CD4-positive, alpha-beta T cell (primary cell): ENCODE measurements at regions of chr4 and their contacts with region 1.

Region 1: DNA sequence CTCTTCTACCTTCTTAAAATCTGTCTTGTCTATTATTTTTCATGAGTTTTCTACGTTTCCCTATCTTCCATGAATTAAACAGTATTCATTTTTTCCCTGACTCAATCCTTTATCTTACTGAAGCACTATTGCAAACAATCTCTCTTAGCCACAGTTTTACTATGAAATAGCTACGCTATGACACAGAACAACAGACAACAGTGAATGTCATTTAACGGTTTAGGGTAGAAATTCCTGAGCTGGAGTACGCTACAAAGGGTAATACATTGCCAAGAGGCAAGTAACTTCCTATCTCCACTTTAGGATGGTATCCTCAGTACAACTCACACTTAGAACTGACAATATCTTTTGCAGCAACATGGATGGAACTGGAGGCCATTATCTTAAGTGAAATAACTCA is 552.6 kb downstream of the INPP4B start:
- DNase-seq: no peak
- ATAC-seq: no peak
- H3K4me3 ChIP-seq: no peak overlapping the region
- H3K4me3 Mint-ChIP-seq: no peak overlapping the region
- H3K27ac ChIP-seq: no peak overlapping the region
- H3K27ac Mint-ChIP-seq: peak overlapping the region; percentile 70
- H3K4me1 ChIP-seq: peaks cover 9% of the 10 kb centered on the region
- H3K4me1 Mint-ChIP-seq: peaks cover 56% of the 10 kb centered on the region
- H3K27me3 ChIP-seq: no peaks in the 10 kb centered on the region
- H3K27me3 Mint-ChIP-seq: no peaks in the 10 kb centered on the region
- CTCF ChIP-seq: no peak

Region 2: DNA sequence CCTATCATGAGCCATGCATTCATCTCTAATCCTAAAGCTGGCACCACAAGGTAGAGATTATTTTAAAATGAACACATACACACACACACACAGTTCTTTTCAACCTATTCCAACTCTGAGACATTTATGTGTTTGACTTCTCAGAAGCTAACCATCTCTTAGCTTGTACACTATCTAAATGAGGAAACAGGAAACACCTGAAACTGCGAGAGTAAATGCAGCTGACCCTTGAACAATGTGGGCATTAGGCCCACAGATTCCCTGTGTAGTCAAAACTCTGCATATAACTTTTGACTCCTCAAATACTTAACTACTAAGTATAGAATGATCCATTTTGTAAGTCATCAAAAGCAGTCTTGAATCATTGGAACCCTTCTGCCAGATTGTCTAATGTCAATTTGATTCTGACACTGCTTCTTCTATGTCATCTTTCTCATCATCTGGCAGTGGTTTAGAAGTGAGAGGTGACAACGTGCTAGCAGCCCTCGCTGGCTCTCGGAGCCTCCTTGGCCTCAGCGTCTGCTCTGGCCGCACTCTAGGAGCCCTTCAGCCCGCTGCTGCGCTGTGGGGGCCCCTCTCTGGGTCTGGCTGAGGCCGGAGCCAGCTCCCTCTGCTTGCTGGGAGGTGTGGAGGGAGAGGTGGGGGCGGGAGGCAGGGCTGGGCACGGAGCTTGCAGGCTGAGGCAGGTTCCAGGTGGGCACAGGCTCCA is 678.5 kb before region 1 on chr4:
- CTCF ChIA-PET with region 1: no interaction called
- POLR2A ChIA-PET with region 1: no interaction called
- intact Hi-C with region 1: no loop called
- DNase-seq: no peak
- ATAC-seq: no peak
- H3K4me3 ChIP-seq: no peak overlapping the region
- H3K4me3 Mint-ChIP-seq: no peak overlapping the region
- H3K27ac ChIP-seq: no peak overlapping the region
- H3K27ac Mint-ChIP-seq: no peak overlapping the region
- H3K4me1 ChIP-seq: no peaks in the 10 kb centered on the region
- H3K4me1 Mint-ChIP-seq: no peaks in the 10 kb centered on the region
- H3K27me3 ChIP-seq: no peaks in the 10 kb centered on the region
- H3K27me3 Mint-ChIP-seq: peaks cover 4% of the 10 kb centered on the region
- CTCF ChIP-seq: no peak

Region 3: DNA sequence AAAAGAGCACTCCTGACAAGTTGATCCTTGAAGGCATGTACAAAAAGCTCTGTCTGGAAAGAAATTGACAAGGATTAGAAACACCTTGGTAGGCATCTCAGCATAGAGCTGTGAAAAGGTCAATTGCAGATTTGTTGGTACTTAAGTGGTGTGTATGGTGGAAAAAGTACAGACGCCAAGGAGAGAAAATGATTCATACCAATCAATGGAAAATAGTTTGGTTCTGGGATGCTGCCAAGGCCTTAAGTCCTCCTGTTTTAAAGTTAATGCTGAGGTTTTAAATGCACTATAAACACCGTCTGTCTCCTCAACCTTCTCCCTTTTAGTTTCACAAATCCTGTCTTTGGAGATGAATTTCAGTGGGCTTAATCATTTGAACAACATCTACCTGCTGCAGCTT is 133.0 kb before region 1 on chr4:
- CTCF ChIA-PET with region 1: no interaction called
- POLR2A ChIA-PET with region 1: no interaction called
- intact Hi-C with region 1: no loop called
- DNase-seq: no peak
- ATAC-seq: no peak
- H3K4me3 ChIP-seq: no peak overlapping the region
- H3K4me3 Mint-ChIP-seq: no peak overlapping the region
- H3K27ac ChIP-seq: no peak overlapping the region
- H3K27ac Mint-ChIP-seq: no peak overlapping the region
- H3K4me1 ChIP-seq: no peaks in the 10 kb centered on the region
- H3K4me1 Mint-ChIP-seq: peaks cover 13% of the 10 kb centered on the region
- H3K27me3 ChIP-seq: no peaks in the 10 kb centered on the region
- H3K27me3 Mint-ChIP-seq: no peaks in the 10 kb centered on the region
- CTCF ChIP-seq: no peak

Region 4: DNA sequence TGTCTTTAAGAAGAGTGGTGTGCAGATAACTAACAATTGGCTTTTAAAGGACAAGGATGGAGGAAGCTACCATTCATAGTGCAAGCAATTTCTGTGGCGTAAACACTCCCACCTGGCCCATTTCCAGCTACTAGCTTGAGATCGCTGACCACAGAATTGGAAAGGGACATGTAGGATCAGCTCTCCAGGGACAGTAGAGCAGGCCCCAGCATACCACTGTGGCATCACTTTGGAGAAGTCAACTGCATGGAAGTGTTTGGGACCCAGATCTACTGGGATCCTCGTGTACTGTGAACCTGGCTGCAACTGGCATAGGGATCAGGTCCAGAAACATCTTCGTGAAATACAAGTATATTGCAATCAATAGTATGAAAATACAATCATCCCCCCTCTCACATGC is 37.6 kb after region 1 on chr4:
- CTCF ChIA-PET with region 1: interaction called, 3 read pairs
- POLR2A ChIA-PET with region 1: interaction called, 3 read pairs
- intact Hi-C with region 1: loop called in 1 of 2 experiments (anchors 5 kb)
- DNase-seq: no peak
- ATAC-seq: no peak
- H3K4me3 ChIP-seq: no peak overlapping the region
- H3K4me3 Mint-ChIP-seq: no peak overlapping the region
- H3K27ac ChIP-seq: no peak overlapping the region
- H3K27ac Mint-ChIP-seq: peak overlapping the region; percentile 35
- H3K4me1 ChIP-seq: peaks cover 18% of the 10 kb centered on the region
- H3K4me1 Mint-ChIP-seq: peaks cover 80% of the 10 kb centered on the region
- H3K27me3 ChIP-seq: no peaks in the 10 kb centered on the region
- H3K27me3 Mint-ChIP-seq: no peaks in the 10 kb centered on the region
- CTCF ChIP-seq: no peak

Region 5: GRCh38 chr4:142549726-142550463 is 256.4 kb after region 1 on chr4:
- CTCF ChIA-PET with region 1: no interaction called
- POLR2A ChIA-PET with region 1: no interaction called
- intact Hi-C with region 1: no loop called
- DNase-seq: peak in 1 of 14 experiments; percentile 31
- ATAC-seq: peak; percentile 58
- H3K4me3 ChIP-seq: no peak overlapping the region
- H3K4me3 Mint-ChIP-seq: no peak overlapping the region
- H3K27ac ChIP-seq: no peak overlapping the region
- H3K27ac Mint-ChIP-seq: peak overlapping the region; percentile 28
- H3K4me1 ChIP-seq: peaks cover 14% of the 10 kb centered on the region
- H3K4me1 Mint-ChIP-seq: peaks cover 61% of the 10 kb centered on the region
- H3K27me3 ChIP-seq: no peaks in the 10 kb centered on the region
- H3K27me3 Mint-ChIP-seq: no peaks in the 10 kb centered on the region
- CTCF ChIP-seq: no peak